Heart right ventricle (tissue), 16 donors: ENCODE measurements at regions of chr5 and their contacts with region 1.

Region 1: GRCh38 chr5:61228691-61229280 is 66.5 kb upstream of the SMIM15 start:
- DNase-seq: no peak
- ATAC-seq: peak in 1 of 8 donors; percentile 37
- H3K4me3 ChIP-seq: peak overlapping the region in 1 of 10 donors; percentile 15
- H3K27ac ChIP-seq: no peak overlapping the region
- H3K4me1 ChIP-seq: peaks cover 0 to 13% (median 0%) of the 10 kb centered on the region in 9 donors
- H3K27me3 ChIP-seq: no peaks in the 10 kb centered on the region
- CTCF ChIP-seq: no peak

Region 2: DNA sequence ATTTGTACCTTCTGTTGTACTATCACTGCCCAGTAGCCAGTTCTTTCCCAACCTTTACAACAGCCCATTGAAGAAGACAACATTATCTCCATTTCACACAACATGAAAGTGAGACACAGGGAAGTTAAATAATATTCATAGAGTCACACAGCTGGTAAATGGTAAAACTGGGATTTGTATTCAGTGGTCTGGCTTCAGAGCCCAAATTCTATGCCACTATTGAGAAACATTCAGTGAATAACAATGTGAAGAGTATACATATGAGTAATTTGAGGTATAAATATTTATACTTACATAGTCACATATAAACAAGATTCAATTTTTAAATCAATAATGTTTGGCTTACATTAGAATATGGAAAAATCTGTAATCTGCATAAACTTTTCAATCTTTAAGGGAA is 80.3 kb before region 1 on chr5:
- intact Hi-C with region 1: no loop called
- DNase-seq: no peak
- ATAC-seq: no peak
- H3K4me3 ChIP-seq: no peak overlapping the region
- H3K27ac ChIP-seq: no peak overlapping the region
- H3K4me1 ChIP-seq: no peaks in the 10 kb centered on the region
- H3K27me3 ChIP-seq: no peaks in the 10 kb centered on the region
- CTCF ChIP-seq: no peak

Region 3: DNA sequence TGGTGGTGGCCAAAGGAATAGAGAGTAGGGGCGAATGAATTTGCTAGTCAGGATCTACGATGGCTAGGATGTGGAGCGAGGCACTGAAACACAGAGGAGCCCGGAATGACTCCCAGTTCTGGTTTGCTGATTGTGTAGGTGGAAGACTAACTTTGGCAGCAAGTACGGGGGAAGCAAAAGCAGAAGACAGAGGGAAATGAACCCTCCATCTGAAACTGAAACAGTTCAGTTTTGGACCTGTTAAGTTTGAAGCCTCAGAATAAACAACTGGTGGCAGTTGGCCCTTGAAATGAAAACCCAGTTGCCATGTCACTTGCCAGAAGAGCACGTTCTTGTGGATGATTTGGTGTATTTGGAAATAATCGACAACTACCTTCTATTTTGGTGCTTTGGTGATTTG is 51.1 kb before region 1 on chr5:
- intact Hi-C with region 1: no loop called
- DNase-seq: no peak
- ATAC-seq: no peak
- H3K4me3 ChIP-seq: no peak overlapping the region
- H3K27ac ChIP-seq: no peak overlapping the region
- H3K4me1 ChIP-seq: no peaks in the 10 kb centered on the region
- H3K27me3 ChIP-seq: no peaks in the 10 kb centered on the region
- CTCF ChIP-seq: no peak

Region 4: DNA sequence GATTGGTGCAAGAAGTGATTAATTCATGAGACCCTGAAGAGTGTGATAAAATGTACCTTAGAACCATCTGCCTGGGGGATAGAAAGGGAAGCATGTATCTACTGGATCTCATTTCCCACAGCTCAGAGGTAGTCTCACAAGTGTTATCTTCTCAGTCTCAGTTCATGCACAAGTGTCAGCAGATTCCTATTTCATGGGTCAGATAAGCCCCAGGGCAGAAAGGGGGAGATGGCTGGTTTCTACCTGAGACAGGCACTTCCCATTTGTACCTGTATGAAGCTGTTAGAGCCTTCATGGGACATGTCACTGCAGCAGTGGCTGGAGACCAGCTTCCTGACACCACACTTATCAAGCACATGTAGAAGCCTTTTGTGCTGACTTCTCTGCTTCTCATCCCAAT is 20.9 kb before region 1 on chr5:
- intact Hi-C with region 1: loop called in 1 of 10 experiments (anchors 1 kb)
- DNase-seq: no peak
- ATAC-seq: no peak
- H3K4me3 ChIP-seq: no peak overlapping the region
- H3K27ac ChIP-seq: no peak overlapping the region
- H3K4me1 ChIP-seq: peaks cover 0 to 9% (median 0%) of the 10 kb centered on the region in 9 donors
- H3K27me3 ChIP-seq: no peaks in the 10 kb centered on the region
- CTCF ChIP-seq: no peak

Region 5: DNA sequence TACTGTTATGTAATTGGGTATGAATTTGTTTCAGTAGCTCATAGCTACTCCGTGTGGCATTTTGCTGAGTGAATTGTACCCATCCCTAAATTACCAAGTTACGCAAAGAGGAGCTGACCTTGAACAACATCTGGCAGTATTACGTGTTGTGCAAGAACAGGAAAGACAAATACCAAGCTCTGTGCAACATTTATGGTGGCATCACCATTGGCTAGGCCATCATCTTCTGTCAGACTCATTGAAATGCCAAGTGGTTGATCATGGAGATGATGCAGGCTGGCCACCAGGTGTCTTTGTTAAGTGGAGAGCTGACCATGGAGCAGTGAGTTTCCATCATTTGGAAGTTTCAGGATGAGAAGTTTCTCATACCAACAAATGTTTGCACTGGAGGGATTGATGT is 118.3 kb after region 1 on chr5:
- intact Hi-C with region 1: no loop called
- DNase-seq: no peak
- ATAC-seq: peak in 1 of 8 donors; percentile 41
- H3K4me3 ChIP-seq: no peak overlapping the region
- H3K27ac ChIP-seq: no peak overlapping the region
- H3K4me1 ChIP-seq: peaks cover 0 to 89% (median 46%) of the 10 kb centered on the region in 9 donors
- H3K27me3 ChIP-seq: no peaks in the 10 kb centered on the region
- CTCF ChIP-seq: no peak